PC-3 (cell line): ENCODE measurements at regions of chr9 and their contacts with region 1.

Region 1: DNA sequence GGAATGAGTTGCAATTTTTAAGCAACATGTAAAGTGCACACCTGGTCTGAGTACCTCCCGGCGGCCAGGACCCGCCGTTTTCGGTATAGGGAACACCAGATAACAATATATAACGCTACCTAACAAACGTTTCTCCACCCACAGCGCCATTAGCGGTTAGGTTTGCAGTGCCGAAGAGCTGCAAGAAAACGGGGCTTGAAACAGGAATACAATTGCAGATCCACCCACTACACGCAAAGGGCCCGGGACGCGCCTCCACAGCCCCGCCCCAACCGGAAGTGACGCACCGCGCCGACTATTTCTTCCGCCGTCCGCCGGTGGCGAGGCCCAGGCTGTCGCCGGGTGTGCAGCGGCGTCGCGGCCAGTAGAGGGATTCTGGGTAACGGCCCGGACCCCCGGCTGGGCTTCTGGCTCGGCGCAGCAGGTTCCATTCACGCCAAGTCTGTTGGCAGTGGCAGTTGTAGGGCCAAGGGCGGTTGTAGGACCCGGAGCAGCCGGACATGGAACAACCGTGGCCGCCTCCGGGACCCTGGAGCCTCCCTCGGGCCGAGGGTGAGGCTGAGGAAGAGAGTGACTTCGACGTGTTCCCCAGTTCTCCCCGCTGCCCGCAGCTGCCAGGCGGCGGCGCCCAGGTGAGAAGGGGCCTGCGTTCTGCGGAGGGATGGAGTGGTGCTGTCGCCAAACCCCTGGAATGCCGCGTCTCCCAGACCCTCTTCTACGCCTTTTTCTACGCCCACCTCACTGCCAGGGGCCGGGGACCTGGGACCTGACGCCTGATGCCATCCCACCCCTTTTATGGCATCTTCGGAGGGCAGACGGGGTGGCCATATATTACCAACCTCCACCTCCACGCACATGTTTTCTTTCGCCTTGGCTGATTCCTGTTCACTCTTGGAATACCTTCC is at the start of gene CDC37L1:
- DNase-seq: peak; percentile 93
- ATAC-seq: peak; percentile 89
- H3K4me3 ChIP-seq: peak within 1 kb of the TSS; percentile 89
- H3K27ac ChIP-seq: peak within 1 kb of the TSS; percentile 67
- H3K4me1 ChIP-seq: peaks cover 31% of the 10 kb centered on the region
- H3K27me3 ChIP-seq: no peaks in the 10 kb centered on the region
- CTCF ChIP-seq: peak; percentile 45
- total RNA-seq, gene CDC37L1: 5.1 and 7.8 TPM in 2 replicates

Region 2: DNA sequence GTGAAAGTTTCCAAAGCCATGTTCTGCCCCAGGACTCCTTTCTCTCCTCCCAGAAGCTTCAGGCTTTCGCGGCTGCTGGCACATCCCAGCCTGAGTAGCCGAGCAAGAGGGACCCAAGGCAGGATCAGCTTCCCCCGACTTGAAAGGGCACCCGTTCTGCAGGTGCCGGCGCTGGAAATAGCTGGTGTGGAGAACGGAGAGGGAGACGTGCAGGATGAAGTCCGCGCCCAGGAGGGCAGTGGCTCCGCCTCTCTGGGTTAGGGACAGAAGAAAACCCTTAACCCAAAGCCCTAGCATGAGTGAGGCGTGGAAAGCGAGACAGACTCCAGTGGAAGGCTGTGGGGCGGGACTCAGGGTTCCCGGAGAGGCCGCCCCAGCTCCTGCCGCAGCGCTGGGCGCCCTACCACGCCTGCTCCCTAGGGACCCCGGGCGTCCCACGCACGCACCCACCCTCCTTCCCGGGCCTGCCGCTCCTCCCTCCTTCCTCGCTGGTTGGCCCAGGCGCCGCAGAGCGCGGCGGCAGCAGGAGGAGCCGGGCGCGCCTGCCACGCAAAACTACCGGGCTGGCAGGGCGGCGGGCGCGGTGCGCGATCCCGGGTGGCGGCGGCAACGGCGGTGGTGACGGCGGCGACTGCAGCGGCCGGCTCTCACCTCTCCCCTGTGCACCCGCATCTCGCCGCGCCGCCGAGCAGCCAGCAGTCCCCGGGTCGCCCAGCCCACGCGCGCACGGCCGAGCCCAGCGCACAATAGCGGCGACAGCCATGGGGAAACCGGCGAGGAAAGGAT is 189.4 kb before region 1 on chr9 and contains the start of gene SLC1A1:
- CTCF ChIA-PET with region 1: no interaction called
- POLR2A ChIA-PET with region 1: no interaction called
- intact Hi-C with region 1: loop called (anchors 5 kb)
- DNase-seq: peak; percentile 63
- ATAC-seq: peak; percentile 81
- H3K4me3 ChIP-seq: peak within 1 kb of the TSS; percentile 85
- H3K27ac ChIP-seq: 0 out of 2 replicates have a peak within 1 kb of the TSS, but pooled peaks have one; percentile 8
- H3K4me1 ChIP-seq: peaks cover 10% of the 10 kb centered on the region; the same call in 1 of the 2 replicates
- H3K27me3 ChIP-seq: no peaks in the 10 kb centered on the region
- CTCF ChIP-seq: no peak
- total RNA-seq, gene SLC1A1: 3.2 and 4.8 TPM in 2 replicates

Region 3: DNA sequence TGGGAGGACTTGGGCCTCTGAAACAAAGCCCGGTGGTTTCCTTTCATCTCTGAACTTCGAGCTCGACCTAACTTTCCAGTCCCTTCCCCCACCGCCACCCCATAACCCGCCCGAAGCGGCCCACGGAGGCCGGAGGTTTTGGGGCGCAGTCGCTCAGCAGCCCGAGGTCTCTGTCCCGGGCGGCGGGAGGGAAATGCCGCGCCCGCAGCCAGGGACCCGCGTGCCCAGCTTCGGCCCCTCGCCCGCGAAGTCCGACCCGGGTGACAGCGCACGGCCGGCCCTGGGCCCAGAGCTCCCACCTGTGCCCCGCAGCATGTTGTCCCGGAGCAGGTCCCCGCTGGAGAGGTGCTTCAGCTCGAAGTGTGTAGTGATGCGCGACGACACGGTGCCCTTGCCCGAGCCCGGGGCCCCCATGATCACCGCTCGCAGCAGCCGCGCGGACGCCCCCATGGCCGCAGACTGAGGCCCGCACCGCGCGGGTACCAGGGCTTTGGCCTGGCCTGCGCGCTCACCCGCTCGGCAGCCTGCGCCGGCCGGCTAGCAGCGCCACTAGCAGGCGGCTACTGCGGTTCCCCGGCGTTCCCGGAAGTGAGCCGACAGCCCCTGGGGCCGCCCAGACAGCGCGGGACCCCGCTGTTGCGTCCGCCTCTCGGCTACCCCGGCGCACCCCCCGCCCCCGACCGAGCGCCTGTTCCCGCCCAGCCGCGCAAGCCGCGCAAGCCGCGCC is 61.3 kb after region 1 on chr9 and contains the start of gene AK3:
- CTCF ChIA-PET with region 1: no interaction called
- POLR2A ChIA-PET with region 1: interaction called, 13 read pairs
- intact Hi-C with region 1: loop called (anchors 2 kb)
- DNase-seq: peak; percentile 72
- ATAC-seq: peak; percentile 87
- H3K4me3 ChIP-seq: peak within 1 kb of the TSS; percentile 96
- H3K27ac ChIP-seq: peak within 1 kb of the TSS; percentile 56
- H3K4me1 ChIP-seq: peaks cover 15% of the 10 kb centered on the region; the same call in 1 of the 2 replicates
- H3K27me3 ChIP-seq: no peaks in the 10 kb centered on the region
- CTCF ChIP-seq: no peak
- total RNA-seq, gene AK3: 42.2 and 79.2 TPM in 2 replicates

Region 4: DNA sequence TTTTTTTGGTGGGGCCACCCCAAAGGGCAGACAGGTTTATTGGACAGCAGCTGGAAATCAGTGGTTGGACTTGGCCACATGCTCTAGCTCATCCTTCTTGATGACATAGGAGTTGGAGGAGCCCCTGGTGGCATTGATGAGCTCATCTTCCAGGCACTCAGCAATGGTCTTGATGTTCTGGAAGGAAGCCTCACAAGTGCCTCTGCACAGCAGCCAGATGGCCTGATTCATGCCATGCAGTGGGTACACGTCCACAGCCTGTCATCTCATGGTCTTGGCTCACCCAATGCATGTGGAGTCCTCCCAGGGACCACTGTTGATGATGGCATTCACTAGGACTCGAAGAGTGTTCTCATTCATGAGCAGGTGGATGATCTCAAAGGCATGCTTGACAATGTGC is 101.9 kb after region 1 on chr9:
- CTCF ChIA-PET with region 1: no interaction called
- POLR2A ChIA-PET with region 1: no interaction called
- intact Hi-C with region 1: no loop called
- DNase-seq: no peak
- ATAC-seq: no peak
- H3K4me3 ChIP-seq: no peak overlapping the region
- H3K27ac ChIP-seq: no peak overlapping the region
- H3K4me1 ChIP-seq: no peaks in the 10 kb centered on the region
- H3K27me3 ChIP-seq: no peaks in the 10 kb centered on the region
- CTCF ChIP-seq: no peak

Region 5: GRCh38 chr9:5288591-5288990 is 609.1 kb after region 1 on chr9:
- CTCF ChIA-PET with region 1: no interaction called
- POLR2A ChIA-PET with region 1: no interaction called
- intact Hi-C with region 1: no loop called
- DNase-seq: peak; percentile 16
- ATAC-seq: no peak
- H3K4me3 ChIP-seq: no peak overlapping the region
- H3K27ac ChIP-seq: no peak overlapping the region
- H3K4me1 ChIP-seq: no peaks in the 10 kb centered on the region
- H3K27me3 ChIP-seq: no peaks in the 10 kb centered on the region
- CTCF ChIP-seq: no peak